HEK293T (cell line): ENCODE measurements at regions of chr12 and their contacts with region 1.

Region 1: DNA sequence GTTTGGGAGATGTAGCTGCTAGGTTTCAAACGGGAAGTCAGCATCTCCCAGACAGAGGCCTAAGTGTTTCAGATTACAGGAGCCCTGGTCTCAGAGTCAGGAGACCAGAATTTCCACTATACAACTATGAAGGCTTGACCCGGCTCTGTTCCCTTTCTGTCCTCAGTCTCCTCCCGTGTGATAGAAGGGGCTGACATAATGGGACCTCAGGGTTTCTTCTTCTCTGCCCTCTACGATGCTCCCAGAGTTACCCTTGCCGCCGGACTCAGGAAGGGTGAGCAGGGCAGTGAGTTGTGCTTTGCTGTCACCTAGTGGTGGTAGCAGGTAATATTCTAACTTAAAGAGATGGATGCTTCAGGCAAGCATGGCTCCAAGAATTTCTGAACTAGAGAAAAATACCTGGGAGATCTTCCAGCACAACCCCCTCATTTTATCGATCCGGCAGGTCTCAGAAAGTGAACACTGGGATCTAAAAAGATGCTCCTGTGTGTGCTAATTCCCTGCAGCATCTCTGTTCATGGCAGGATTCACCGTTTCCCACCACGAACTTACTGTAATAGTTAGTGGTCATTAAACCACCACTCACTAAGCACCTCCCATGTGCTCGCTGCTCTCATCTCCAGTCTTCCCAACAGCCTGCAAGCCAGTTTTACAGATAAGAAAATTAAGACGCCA is 84.4 kb downstream of the VWF start:
- DNase-seq: peak; percentile 74

Region 2: GRCh38 chr12:5996459-5996858 is 43.6 kb before region 1 on chr12:
- CTCF ChIA-PET with region 1: interaction called, 175 read pairs
- POLR2A ChIA-PET with region 1: no interaction called
- DNase-seq: no peak